Activated CD4-positive, alpha-beta memory T cell treated with anti-CD3 and anti-CD28 coated beads for 36 hours (primary cell): ENCODE measurements at regions of chr19 and their contacts with region 1.

Region 1: GRCh38 chr19:58278157-58279041 is at the start of gene ZNF8:
- DNase-seq: peak; percentile 99
- H3K4me3 Mint-ChIP-seq: peak within 1 kb of the TSS; percentile 83
- H3K27ac Mint-ChIP-seq: peak within 1 kb of the TSS; percentile 95
- H3K4me1 Mint-ChIP-seq: peaks cover 35% of the 10 kb centered on the region
- H3K27me3 Mint-ChIP-seq: no peaks in the 10 kb centered on the region
- total RNA-seq, gene ZNF8: 3.7 to 3.9 TPM

Region 2: DNA sequence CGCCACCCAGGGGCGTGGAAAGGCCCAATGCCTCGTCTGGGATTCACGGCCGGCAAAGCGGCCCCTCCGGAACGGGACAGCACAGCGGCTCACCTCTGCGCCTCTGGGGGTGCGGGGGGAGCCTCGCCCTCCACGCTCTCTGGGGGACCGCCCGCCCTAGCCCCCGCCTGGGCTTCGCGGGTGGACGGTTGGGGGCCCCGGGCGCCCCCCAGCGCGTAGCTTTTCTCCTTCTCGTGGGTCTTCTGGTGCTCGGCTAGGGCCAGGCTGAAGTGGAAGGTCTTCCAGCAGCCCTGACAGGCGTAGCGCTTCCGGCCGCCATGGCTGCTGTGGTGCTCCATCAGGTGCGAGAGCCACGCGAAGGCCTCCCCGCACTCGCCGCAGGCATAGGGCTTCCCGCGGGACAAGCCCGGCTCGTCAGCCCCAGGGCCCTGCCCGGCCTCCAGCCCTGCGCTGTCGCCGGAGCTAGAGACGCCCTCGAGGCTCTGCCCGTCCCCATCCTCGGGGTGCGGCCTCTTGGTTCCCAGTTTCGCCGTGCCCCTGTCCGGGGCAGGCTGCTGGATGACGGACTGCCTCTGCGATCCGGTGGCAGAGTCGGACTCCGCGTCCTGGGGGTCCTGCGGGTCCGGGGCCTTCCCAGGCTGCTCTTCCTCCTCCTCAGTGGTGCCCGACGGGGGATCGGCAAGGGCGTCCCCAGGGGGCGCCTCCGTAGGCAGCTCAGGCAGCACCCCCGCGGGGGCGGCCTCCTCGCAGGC is 193.6 kb before region 1 on chr19:
- CTCF ChIA-PET with region 1: no interaction called
- POLR2A ChIA-PET with region 1: no interaction called
- intact Hi-C with region 1: no loop called
- DNase-seq: no peak
- H3K4me3 Mint-ChIP-seq: no peak overlapping the region
- H3K27ac Mint-ChIP-seq: no peak overlapping the region
- H3K4me1 Mint-ChIP-seq: no peaks in the 10 kb centered on the region
- H3K27me3 Mint-ChIP-seq: no peaks in the 10 kb centered on the region

Region 3: GRCh38 chr19:58182989-58183816 is 95.2 kb before region 1 on chr19 and contains the start of gene ZNF274:
- CTCF ChIA-PET with region 1: no interaction called
- POLR2A ChIA-PET with region 1: no interaction called
- intact Hi-C with region 1: loop called (anchors 1 kb)
- DNase-seq: peak; percentile 95
- H3K4me3 Mint-ChIP-seq: peak within 1 kb of the TSS; percentile 92
- H3K27ac Mint-ChIP-seq: peak within 1 kb of the TSS; percentile 99
- H3K4me1 Mint-ChIP-seq: peaks cover 16% of the 10 kb centered on the region
- H3K27me3 Mint-ChIP-seq: no peaks in the 10 kb centered on the region
- total RNA-seq, gene ZNF274: 19.1 to 19.6 TPM

Region 4: DNA sequence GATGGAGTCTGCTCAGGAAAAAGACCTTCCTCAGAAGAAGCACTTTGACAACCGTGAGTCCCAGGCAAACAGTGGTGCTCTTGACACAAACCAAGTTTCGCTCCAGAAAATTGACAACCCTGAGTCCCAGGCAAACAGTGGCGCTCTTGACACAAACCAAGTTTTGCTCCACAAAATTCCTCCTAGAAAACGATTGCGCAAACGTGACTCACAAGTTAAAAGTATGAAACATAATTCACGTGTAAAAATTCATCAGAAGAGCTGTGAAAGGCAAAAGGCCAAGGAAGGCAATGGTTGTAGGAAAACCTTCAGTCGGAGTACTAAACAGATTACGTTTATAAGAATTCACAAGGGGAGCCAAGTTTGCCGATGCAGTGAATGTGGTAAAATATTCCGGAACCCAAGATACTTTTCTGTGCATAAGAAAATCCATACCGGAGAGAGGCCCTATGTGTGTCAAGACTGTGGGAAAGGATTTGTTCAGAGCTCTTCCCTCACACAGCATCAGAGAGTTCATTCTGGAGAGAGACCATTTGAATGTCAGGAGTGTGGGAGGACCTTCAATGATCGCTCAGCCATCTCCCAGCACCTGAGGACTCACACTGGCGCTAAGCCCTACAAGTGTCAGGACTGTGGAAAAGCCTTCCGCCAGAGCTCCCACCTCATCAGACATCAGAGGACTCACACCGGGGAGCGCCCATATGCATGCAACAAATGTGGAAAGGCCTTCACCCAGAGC is 65.9 kb before region 1 on chr19:
- CTCF ChIA-PET with region 1: no interaction called
- POLR2A ChIA-PET with region 1: no interaction called
- intact Hi-C with region 1: no loop called
- DNase-seq: no peak
- H3K4me3 Mint-ChIP-seq: no peak overlapping the region
- H3K27ac Mint-ChIP-seq: no peak overlapping the region
- H3K4me1 Mint-ChIP-seq: no peaks in the 10 kb centered on the region
- H3K27me3 Mint-ChIP-seq: no peaks in the 10 kb centered on the region

Region 5: GRCh38 chr19:58228585-58229254 is 49.7 kb before region 1 on chr19 and contains the start of gene ZNF544:
- CTCF ChIA-PET with region 1: interaction called, 5 read pairs
- POLR2A ChIA-PET with region 1: no interaction called
- intact Hi-C with region 1: loop called (anchors 10 kb)
- DNase-seq: peak; percentile 82
- H3K4me3 Mint-ChIP-seq: peak within 1 kb of the TSS; percentile 95
- H3K27ac Mint-ChIP-seq: peak within 1 kb of the TSS; percentile 92
- H3K4me1 Mint-ChIP-seq: peaks cover 32% of the 10 kb centered on the region
- H3K27me3 Mint-ChIP-seq: no peaks in the 10 kb centered on the region
- total RNA-seq, gene ZNF544: 39.6 to 45.4 TPM

Region 6: GRCh38 chr19:58252102-58252685 is 26.2 kb before region 1 on chr19:
- CTCF ChIA-PET with region 1: no interaction called
- POLR2A ChIA-PET with region 1: no interaction called
- intact Hi-C with region 1: no loop called
- DNase-seq: no peak
- H3K4me3 Mint-ChIP-seq: no peak overlapping the region
- H3K27ac Mint-ChIP-seq: no peak overlapping the region
- H3K4me1 Mint-ChIP-seq: no peaks in the 10 kb centered on the region
- H3K27me3 Mint-ChIP-seq: no peaks in the 10 kb centered on the region

Region 7: DNA sequence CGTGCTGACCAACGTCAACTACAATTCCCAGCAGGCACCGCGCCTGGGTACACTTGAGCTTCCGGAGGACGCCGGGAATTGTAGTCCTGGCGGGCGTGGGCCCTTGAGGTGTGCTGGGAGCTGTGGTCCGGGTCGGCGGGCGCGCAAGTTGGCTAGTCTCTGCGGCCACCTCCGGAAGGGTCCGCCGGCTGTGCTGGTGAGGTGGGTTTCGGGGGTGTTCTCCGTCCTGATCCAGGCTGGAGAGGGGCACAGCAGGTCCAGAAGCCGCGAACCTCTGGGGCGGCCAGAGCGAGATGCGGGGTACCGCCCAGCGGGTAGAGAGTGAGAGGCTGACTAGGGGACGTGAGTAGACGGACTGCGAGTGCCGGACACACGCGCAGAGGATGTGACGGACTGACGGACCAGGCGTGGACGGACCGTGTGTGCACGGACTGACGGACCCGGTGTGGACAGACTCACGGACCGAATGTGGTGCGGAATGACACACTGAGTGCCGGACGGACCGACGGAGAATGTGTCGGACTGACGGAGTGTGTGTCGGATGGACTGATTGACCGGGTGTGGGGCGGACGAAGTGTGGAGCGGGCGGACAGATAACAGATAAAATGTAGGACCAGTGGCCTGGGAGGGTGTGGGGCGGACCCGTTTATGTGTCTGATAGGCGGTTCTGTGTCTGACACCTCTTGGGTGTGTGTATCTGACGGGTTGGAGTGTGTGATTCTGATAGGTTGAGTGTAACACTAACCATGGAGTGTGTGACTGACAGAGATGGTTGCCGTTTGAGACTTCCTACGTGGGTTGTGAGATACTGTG is 48.7 kb after region 1 on chr19 and contains the start of gene ZSCAN22:
- CTCF ChIA-PET with region 1: no interaction called
- POLR2A ChIA-PET with region 1: no interaction called
- intact Hi-C with region 1: loop called (anchors 1 kb)
- DNase-seq: peak; percentile 95
- H3K4me3 Mint-ChIP-seq: no peak within 1 kb of the TSS
- H3K27ac Mint-ChIP-seq: no peak within 1 kb of the TSS
- H3K4me1 Mint-ChIP-seq: peaks cover 4% of the 10 kb centered on the region
- H3K27me3 Mint-ChIP-seq: no peaks in the 10 kb centered on the region
- total RNA-seq, gene ZSCAN22: 3.1 to 3.3 TPM

Region 8: DNA sequence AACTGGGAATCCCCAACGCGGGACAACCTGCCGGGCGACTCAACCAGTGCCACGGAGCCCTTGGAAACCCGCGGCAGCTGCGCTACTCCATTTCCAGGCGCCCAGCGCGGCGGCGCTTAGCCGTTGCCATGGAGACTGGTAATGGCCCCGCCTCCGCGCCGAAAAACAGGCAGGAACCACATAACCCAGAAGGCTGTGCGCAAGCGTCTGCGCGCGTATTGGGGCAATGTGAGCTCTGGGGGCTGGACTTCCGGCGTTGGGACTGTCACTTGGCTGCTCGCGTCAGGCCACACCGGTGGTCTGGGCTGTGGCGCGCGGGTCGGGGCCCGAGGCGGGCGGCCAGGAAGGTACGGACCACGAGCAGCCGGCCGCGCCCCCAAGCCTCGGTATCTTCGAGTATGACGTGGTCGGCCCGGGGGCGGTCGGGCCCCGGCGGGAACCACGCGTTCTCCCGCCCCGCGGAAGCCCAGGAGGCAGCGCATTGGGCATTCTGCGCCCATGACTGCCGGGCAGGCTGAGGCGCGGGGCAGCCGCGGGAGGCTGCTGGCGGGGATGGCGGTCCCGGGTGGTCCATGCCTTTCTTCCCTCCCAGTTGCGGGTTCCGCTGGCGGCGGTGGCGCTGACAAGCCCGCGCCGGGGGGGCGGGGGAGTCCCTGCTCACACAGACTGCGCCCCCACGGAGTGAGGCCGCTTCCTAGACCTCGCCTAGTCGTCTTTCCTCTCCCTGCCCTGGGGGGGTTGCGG is 173.1 kb after region 1 on chr19 and contains the start of gene ZNF324B:
- CTCF ChIA-PET with region 1: no interaction called
- POLR2A ChIA-PET with region 1: no interaction called
- intact Hi-C with region 1: no loop called
- DNase-seq: peak; percentile 97
- H3K4me3 Mint-ChIP-seq: peak within 1 kb of the TSS; percentile 78
- H3K27ac Mint-ChIP-seq: no peak within 1 kb of the TSS
- H3K4me1 Mint-ChIP-seq: peaks cover 21% of the 10 kb centered on the region
- H3K27me3 Mint-ChIP-seq: peaks cover 13% of the 10 kb centered on the region
- total RNA-seq, gene ZNF324B: 7.7 to 7.8 TPM

Region 9: GRCh38 chr19:58466760-58467589 is 188.6 kb after region 1 on chr19 and contains the start of gene ZNF324:
- CTCF ChIA-PET with region 1: no interaction called
- POLR2A ChIA-PET with region 1: no interaction called
- intact Hi-C with region 1: loop called (anchors 2 kb)
- DNase-seq: peak; percentile 99
- H3K4me3 Mint-ChIP-seq: peak within 1 kb of the TSS; percentile 83
- H3K27ac Mint-ChIP-seq: peak within 1 kb of the TSS; percentile 62
- H3K4me1 Mint-ChIP-seq: peaks cover 17% of the 10 kb centered on the region
- H3K27me3 Mint-ChIP-seq: no peaks in the 10 kb centered on the region
- total RNA-seq, gene ZNF324: 7.0 to 8.3 TPM

Region 10: DNA sequence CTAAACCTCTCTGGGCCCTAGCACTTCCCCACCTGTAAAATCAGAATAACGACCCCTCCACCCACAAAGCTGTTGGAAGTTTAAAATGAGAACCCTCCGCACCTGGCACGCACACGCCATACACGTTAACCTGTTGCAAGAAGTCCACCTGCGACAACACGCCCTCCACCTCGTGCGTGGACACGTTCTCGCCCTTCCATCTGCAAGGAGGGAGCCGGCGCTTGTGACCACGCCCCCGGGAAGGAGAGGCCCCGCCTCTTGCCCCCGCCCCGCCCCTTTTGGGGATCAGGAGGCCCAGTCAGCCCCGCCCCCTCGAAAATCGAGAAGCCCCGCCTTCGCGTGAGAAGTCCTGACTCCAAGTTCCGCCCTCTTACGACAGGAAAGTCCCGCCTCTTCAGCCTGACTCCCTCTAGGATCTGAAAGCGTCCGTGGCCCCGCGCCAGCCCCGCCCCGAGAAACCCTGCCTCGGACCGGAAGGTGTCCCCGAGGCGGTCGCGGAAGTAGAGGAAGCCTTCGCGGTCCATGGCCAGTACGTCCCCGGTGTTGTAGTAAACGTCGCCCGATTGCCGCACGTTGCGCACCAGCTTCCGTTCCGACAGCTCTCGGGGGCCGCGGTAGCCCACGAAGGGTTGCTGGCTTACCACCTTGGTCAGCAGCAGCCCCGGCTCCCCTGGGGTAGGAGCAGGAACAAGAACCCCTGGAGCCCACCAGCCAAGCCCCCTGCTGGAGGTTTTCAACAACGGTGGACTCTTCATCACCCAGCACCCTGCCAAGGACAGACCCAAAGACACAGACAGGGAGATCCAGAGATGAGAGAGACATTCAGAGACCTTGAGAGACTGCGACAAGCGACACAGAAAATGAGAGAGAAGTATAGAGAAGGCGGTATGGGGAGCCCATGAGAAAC is 220.9 kb after region 1 on chr19:
- CTCF ChIA-PET with region 1: no interaction called
- POLR2A ChIA-PET with region 1: no interaction called
- intact Hi-C with region 1: loop called (anchors 1 kb)
- DNase-seq: peak; percentile 100
- H3K4me3 Mint-ChIP-seq: peak overlapping the region; percentile 89
- H3K27ac Mint-ChIP-seq: peak overlapping the region; percentile 80
- H3K4me1 Mint-ChIP-seq: peaks cover 27% of the 10 kb centered on the region
- H3K27me3 Mint-ChIP-seq: no peaks in the 10 kb centered on the region